Posterior vena cava (tissue), 2 donors: ENCODE measurements at regions of chr5 and their contacts with region 1.

Region 1: GRCh38 chr5:154949781-154950180 is 8.9 kb downstream of the MRPL22 start:
- DNase-seq: no peak

Region 2: DNA sequence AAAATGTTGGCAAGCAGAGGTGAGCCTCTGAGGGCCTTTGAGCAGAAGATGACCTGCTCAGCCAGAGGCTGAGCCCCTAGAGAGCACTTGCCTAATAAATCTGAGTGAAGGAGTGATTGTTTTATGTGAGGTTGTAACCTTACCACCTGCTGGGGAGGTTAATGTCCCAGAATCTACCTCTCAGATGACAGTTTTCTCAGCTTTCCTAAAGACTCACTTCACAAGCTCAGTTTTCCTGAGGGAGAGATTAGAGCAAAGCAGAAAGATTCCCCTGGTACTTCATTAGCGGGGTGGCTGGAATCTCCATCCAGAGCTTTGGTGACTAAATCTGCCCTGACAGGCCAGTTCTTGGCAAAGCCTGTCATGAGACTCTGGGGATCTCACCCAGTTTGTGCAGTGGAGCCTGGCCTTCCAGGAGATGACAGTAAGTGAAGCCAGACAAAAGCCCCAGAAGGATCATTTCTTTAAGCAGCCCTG is 808.0 kb before region 1 on chr5:
- intact Hi-C with region 1: loop called in 1 of 2 experiments (anchors 5 kb)
- DNase-seq: no peak

Region 3: DNA sequence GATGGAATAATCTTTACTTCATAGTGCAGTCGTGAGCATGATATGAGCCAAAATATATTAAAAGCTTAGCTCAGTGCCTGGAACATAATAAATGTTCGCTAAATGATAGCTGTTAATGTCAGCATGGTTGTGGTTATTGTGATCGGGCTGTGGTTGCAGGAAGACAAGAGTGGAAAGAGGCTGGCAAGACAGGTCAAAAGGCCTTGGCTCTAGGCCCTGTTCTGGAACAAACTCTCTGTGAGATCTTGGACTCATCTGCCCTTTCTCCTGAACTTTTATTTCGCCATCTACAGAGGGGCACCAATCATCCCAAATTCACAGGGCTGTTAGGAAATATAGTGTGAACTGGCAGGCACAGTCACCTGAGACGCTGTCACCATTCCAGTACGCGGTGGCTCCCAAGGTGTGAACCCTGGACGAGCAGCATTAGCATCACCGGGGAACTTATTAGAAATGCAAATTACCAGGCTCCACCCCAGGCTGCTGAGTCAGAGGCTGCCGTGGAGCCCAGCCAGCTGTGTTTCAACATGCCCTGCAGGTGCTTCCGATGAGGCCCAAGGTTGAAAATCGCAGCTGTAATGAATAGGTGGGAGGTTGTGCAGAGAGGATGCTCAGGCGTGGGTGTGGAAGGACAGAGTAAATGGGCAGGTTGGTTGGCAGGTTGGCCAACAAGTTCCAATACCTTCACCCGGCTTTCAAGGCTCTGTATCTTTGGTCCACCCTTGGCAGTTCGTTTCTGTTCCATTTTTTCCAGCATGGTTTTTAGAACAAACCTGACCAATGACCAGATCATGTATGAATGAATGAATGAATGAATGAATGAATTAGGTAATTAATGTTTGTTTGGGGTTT is 554.1 kb before region 1 on chr5:
- intact Hi-C with region 1: no loop called
- DNase-seq: no peak

Region 4: DNA sequence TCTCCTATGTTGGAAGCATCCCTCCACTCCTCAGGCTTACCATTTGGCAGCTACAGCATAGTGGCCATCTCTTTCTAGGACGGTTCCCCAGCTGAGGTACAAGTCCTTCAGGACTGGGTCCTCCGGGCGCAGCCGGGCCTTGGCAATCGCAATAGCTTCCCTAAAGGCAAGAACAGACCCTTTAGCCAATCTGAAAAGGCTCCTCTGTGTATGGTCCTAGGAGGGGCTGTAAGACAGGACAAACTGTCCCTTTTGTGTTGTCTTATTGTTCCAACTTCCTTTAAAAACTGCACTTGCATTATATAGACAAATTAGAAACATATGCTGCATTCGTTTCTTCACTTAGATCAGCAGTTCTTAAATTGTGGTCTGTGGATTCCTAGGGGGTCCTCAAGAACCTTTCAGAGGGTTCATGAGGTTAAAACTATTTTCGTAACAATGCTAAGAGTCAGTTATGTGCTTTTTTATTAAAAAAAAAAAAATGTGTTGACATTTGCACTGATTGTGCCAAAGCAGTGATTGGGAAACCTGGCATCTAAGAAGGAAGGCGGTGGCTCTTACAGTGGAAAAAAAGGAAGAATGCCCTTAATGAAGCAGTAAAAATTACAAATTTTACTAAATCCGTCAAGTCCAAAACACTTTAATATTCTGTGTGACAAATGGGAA is 50.5 kb before region 1 on chr5:
- intact Hi-C with region 1: no loop called
- DNase-seq: no peak

Region 5: GRCh38 chr5:154934881-154935280 is 14.9 kb before region 1 on chr5:
- intact Hi-C with region 1: no loop called
- DNase-seq: no peak